ENCODE measurements at regions of chr10 and their contacts with region 1.

Region 1: DNA sequence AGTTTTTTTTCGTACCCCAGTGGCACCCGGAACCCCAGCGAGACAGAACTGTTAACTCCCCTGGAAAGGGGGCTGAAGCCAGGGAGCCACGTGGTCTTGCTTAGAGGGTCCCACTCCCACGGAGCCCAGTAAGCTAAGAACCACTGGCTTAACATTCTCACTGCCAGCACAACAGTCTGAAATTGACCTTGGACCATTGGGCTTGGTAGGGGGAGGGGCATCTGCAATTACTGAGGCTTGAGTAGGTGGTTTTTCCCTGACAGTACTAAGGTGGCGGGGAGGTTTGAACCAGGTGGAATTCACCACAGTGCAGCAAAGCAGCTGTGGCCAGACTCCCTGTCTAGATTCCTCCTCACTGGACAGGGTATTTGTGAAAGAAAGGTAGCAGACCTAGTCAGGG is 196.5 kb downstream of the ADK start:
- DNase-seq: no peak
- ATAC-seq: no peak
- H3K4me3 ChIP-seq: no peak overlapping the region
- H3K27ac ChIP-seq: no peak overlapping the region
- H3K4me1 ChIP-seq: no peaks in the 10 kb centered on the region
- H3K27me3 ChIP-seq: no peaks in the 10 kb centered on the region
- CTCF ChIP-seq: no peak
- POLR2A ChIP-seq: no peak
- RAD21 ChIP-seq: no peak

Region 2: DNA sequence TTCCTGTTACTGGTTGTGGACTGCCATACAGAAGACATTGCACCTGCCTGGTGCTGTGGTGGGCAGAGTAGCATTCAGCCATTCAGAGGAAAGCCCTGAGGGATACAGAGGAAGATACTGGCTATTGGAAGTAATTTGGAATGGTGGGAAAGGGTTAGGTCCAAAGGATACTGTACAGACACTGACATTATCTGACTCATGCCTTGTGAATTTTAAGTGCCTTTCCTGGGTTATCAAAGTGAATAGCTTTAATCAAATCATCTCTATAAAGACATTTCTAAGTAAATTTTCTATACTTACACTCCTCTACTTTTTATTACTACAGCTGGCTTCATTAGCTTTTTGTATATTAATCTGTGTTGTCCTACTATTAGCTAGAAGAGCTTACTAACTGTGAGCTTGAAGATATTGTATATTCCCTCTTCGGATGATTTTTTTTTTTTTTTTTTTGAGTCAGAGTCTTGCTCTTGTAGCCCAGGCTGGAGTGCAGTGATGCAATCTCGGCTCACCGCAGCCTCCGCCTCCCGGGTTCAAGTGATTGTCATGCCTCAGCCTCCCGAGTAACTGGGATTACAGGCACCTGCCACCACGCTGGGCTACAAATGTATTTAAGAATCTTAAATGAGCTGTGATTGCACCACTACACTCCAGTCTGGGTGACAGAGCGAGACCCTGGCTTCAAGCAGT is 10.0 kb before region 1 on chr10:
- CTCF ChIA-PET with region 1: no interaction called
- POLR2A ChIA-PET with region 1: interaction called, 11 read pairs
- dilution Hi-C with region 1: no loop called
- in situ Hi-C with region 1: no loop called
- intact Hi-C with region 1: no loop called
- DNase-seq: no peak
- ATAC-seq: 0 out of 2 replicates have a peak, but pooled peaks have one; percentile 32
- H3K4me3 ChIP-seq: no peak overlapping the region
- H3K27ac ChIP-seq: no peak overlapping the region
- H3K4me1 ChIP-seq: peaks cover 2% of the 10 kb centered on the region; the same call in 1 of the 2 replicates
- H3K27me3 ChIP-seq: no peaks in the 10 kb centered on the region
- CTCF ChIP-seq: no peak
- POLR2A ChIP-seq: no peak
- RAD21 ChIP-seq: no peak

Measured in IMR-90 (cell line).